Cardiac septum (tissue), 1 donor: ENCODE measurements at regions of chr11 and their contacts with region 1.

Region 1: DNA sequence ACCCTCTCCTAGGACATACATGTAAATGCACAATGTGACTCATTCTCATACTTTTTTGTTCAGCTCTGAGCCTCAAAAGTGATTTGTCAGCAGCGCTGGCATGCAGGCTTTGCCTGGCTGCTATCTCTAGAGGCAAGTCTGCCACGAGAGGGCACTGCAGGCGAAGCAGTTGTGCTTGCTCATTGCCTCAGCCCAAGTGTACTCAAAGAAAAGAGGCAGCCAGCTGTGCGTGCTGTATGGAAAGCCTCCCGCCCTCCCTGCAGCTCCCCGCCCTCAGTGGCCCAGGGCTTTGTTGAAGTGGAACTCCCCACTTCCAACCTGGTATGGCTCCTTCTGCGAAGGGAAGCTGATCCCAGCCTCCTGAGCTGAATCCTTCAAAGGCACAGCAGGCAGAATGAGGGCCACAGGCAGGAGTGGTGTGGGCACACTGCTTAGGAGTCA is 16.3 kb downstream of the SDHAF2 start:
- DNase-seq: peak; percentile 94

Region 2: GRCh38 chr11:61071208-61071681 is 375.0 kb before region 1 on chr11:
- intact Hi-C with region 1: no loop called
- DNase-seq: peak; percentile 46

Region 3: GRCh38 chr11:61516675-61517572 is 70.7 kb after region 1 on chr11:
- intact Hi-C with region 1: loop called (anchors 2 kb)
- DNase-seq: no peak

Region 4: GRCh38 chr11:61581030-61581928 is 135.0 kb after region 1 on chr11 and contains the start of gene SYT7:
- intact Hi-C with region 1: loop called (anchors 5 kb)
- DNase-seq: peak; percentile 96
- total RNA-seq, gene SYT7: 9.3 TPM

Region 5: GRCh38 chr11:61627567-61628445 is 181.6 kb after region 1 on chr11:
- intact Hi-C with region 1: loop called (anchors 5 kb)
- DNase-seq: peak; percentile 83

Region 6: DNA sequence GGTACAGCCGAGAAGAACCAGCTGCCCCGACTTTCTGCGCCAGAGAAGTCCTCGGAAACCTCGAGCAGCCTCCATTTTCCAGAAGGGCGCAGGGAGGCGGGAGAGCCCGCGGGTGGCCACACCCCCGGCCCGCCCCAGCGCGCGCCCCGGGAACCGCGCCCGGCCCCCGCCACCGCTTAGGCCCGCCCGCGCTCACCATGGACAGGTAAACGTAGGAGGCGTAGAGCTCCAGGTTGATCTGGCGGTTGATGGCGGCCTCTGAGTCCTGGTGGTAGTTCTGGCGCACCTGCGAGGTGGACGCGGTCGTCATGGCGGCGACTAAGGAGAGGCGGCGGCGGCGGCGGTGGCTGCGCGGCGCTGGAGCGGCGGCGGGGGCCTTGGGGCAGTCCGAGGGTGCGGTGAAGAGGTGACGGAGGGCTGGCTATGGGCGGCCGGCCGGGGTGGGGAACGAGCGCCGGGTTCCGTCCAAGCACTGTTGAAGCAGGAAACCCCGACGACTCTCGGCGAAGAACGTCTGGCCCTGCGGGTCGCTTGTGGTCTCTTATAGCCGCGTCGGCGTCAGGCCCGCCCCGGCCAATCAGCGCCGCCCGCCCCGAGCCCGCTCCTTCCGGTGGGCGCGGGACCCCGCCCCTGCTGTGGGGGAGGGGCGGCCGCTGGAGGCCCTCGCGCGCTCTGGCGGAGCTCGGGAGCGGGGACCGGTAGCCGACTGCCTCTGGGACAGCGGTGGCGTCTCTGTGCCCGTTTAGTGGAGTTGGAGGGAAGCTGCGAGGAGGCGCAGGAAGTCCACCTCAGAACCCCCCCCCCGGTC is 521.1 kb after region 1 on chr11 and contains the start of gene FTH1:
- intact Hi-C with region 1: no loop called
- DNase-seq: peak; percentile 97
- total RNA-seq, gene FTH1: 3,174 TPM